Activated T-helper 2 cell treated with anti-CD3 and anti-CD28 coated beads, Interferon-gamma antibody, Interleukin-2, Interleukin-4, amounts not matched to agents 10 μg/mL and 5 μg/mL and 100 μg/mL, durations not matched to agents 14 hours and 24 hours and 36 hours (primary cell): ENCODE measurements at regions of chr7 and their contacts with region 1.

Region 1: DNA sequence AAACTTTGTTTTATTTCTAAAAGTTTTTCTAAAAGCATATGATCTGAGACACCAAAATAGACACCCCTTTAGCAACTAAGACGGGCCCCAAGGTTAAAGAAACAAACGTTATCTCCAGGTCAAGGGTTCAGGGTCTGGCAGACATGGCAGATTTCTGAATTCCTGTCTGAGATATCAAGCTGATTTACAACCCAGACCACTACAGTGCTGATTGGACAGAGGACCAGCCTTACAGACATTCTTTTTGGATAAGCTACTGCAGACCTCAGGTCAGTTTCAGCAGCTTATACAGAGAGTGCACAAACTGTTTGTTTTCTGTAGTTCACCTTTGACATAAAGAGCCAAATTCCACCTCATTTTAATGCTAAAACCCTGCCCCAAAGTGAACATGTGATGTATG is 34.8 kb downstream of the SVOPL start:
- DNase-seq: no peak
- H3K4me3 Mint-ChIP-seq: no peak overlapping the region
- H3K27ac Mint-ChIP-seq: no peak overlapping the region
- H3K4me1 Mint-ChIP-seq: peaks cover 35% of the 10 kb centered on the region
- H3K27me3 Mint-ChIP-seq: peaks cover 45% of the 10 kb centered on the region

Region 2: GRCh38 chr7:138459413-138460175 is 206.8 kb before region 1 on chr7:
- intact Hi-C with region 1: loop called (anchors 5 kb)
- DNase-seq: peak; percentile 97
- H3K4me3 Mint-ChIP-seq: peak overlapping the region; percentile 74
- H3K27ac Mint-ChIP-seq: peak overlapping the region; percentile 21
- H3K4me1 Mint-ChIP-seq: peaks cover 24% of the 10 kb centered on the region
- H3K27me3 Mint-ChIP-seq: peaks cover 3% of the 10 kb centered on the region

Region 3: DNA sequence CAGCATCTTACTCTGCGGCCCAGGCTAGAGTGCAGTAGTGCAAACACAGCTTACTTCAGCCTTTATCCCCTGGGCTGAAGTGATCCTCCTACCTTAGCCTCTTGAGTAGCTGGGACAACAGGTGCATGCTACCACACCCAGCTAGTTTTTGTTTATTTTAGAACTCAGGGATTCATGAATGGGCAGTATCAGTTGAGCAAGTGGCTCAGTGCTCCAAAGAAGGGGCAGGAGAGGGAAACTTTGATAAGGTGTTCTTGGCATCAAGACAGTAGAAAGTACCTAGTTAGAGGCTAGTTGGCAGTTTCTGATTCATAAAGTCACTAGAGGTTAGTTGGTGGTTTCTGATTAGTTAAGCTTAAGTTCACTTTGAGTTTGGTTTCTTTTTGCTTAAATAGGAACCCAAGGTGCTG is 187.9 kb before region 1 on chr7:
- intact Hi-C with region 1: no loop called
- DNase-seq: no peak
- H3K4me3 Mint-ChIP-seq: no peak overlapping the region
- H3K27ac Mint-ChIP-seq: no peak overlapping the region
- H3K4me1 Mint-ChIP-seq: peaks cover 37% of the 10 kb centered on the region
- H3K27me3 Mint-ChIP-seq: no peaks in the 10 kb centered on the region

Region 4: GRCh38 chr7:138684360-138684759 is 18.0 kb after region 1 on chr7:
- intact Hi-C with region 1: loop called (anchors 1 kb)
- DNase-seq: no peak
- H3K4me3 Mint-ChIP-seq: no peak overlapping the region
- H3K27ac Mint-ChIP-seq: no peak overlapping the region
- H3K4me1 Mint-ChIP-seq: peaks cover 3% of the 10 kb centered on the region
- H3K27me3 Mint-ChIP-seq: peaks cover 2% of the 10 kb centered on the region

Region 5: GRCh38 chr7:138752568-138753518 is 86.5 kb after region 1 on chr7:
- intact Hi-C with region 1: loop called (anchors 5 kb)
- DNase-seq: peak; percentile 86
- H3K4me3 Mint-ChIP-seq: no peak overlapping the region
- H3K27ac Mint-ChIP-seq: peak overlapping the region; percentile 50
- H3K4me1 Mint-ChIP-seq: peaks cover 35% of the 10 kb centered on the region
- H3K27me3 Mint-ChIP-seq: peaks cover 11% of the 10 kb centered on the region

Region 6: DNA sequence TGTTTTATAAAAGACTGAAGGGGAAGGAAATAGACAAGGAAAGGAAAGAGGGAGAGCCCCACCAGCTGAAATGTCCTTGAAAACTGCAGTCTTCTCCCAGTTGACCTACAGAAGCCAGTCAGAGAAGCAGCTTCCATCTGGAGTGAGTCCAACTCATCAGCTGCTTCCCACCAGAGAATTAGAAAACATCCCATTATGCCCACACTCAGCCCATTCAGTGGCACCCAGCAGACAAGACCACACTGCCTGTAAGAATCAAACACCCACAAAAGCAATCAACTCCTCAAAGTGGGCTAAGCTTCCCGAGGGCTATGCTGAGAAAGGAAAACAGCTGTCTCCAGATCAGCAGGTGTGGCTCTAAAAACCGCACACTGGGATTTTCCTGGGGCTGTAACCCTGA is 101.9 kb after region 1 on chr7:
- intact Hi-C with region 1: no loop called
- DNase-seq: no peak
- H3K4me3 Mint-ChIP-seq: no peak overlapping the region
- H3K27ac Mint-ChIP-seq: no peak overlapping the region
- H3K4me1 Mint-ChIP-seq: no peaks in the 10 kb centered on the region
- H3K27me3 Mint-ChIP-seq: peaks cover 10% of the 10 kb centered on the region